Head of caudate nucleus (tissue), 42 donors: ENCODE measurements at regions of chr1 and their contacts with region 1.

Region 1: GRCh38 chr1:155989242-155990004 is 11.1 kb upstream of the ARHGEF2 start:
- DNase-seq: peak; percentile 70 to 93 (median 85)

Region 2: DNA sequence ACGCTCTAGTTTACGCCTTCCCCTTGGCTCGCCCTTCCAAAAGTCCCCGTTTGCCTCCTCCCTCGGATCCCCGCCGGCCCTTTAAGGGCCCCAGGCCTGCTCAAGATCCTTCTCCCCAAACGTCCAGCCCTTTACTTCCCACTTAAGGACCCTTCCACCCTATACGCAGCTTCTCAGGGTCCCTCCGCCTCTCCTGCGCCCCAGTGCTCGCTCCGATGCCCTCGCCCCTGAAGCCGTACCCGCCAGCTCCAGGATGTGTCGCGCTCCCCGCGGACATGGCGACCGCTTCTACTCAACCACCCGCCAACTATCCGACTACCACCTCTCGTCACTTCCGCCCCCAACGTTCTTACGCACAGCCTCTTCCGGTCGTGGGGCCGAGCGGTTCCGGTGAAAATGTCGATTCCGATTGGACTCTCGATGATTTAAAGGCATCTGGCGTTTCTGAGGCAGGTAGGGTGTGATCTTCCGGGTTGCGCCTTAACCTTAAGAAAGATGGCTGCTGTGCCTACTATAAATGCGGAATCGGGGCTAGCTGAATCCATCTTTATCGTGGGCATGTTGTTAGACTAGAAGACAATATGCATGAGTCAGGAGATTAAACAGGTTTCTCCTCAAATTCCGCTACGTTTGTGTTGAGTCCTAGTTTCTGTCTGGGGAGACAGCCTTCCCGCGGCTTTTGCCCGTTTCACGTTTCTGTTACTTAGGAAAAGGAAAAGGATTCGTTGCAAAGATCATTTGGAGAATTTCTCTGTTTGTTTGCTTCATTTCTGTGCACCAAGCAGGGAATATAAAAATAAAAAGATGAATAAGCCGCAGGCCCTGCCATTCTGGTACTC is 55.1 kb before region 1 on chr1 and contains the start of gene KHDC4:
- intact Hi-C with region 1: loop called (anchors 2 kb)
- DNase-seq: peak; percentile 92 to 99 (median 97)

Region 3: GRCh38 chr1:156054500-156055280 is 65.3 kb after region 1 on chr1 and contains the start of gene LAMTOR2:
- intact Hi-C with region 1: loop called (anchors 10 kb)
- DNase-seq: peak; percentile 97 to 100 (median 99)